ENCODE measurements at regions of chr17 and their contacts with region 1.

Region 1: GRCh38 chr17:35808962-35809854 is at the start of gene TAF15:
- DNase-seq: peak; percentile 85 to 97 (median 97)
- ATAC-seq: peak; percentile 97
- H3K4me3 ChIP-seq: peak within 1 kb of the TSS; percentile 91
- H3K4me3 Mint-ChIP-seq: peak within 1 kb of the TSS; percentile 86 to 99 (median 96)
- H3K27ac ChIP-seq: peak within 1 kb of the TSS; percentile 83
- H3K27ac Mint-ChIP-seq: peak within 1 kb of the TSS; percentile 91 to 99 (median 97)
- H3K4me1 ChIP-seq: peaks cover 33 to 37% of the 10 kb centered on the region in 2 donors
- H3K4me1 Mint-ChIP-seq: peaks cover 31 to 68% (median 57%) of the 10 kb centered on the region in 7 donors
- H3K27me3 ChIP-seq: no peaks in the 10 kb centered on the region
- H3K27me3 Mint-ChIP-seq: no peaks in the 10 kb centered on the region
- total RNA-seq, gene TAF15: 162 to 281 (median 243) TPM

Region 2: GRCh38 chr17:34961093-34961911 is 847.9 kb before region 1 on chr17 and contains the starts of genes CCT6B and ZNF830:
- CTCF ChIA-PET with region 1: no interaction called
- POLR2A ChIA-PET with region 1: interaction called, 3 read pairs
- intact Hi-C with region 1: loop called in 1 of 2 experiments (anchors 1 kb)
- DNase-seq: peak; percentile 69 to 94 (median 91)
- ATAC-seq: peak; percentile 95
- H3K4me3 ChIP-seq: peak within 1 kb of the TSS; percentile 94
- H3K4me3 Mint-ChIP-seq: peak within 1 kb of the TSS; percentile 97 to 100 (median 99)
- H3K27ac ChIP-seq: peak within 1 kb of the TSS; percentile 92
- H3K27ac Mint-ChIP-seq: peak within 1 kb of the TSS; percentile 98 to 100 (median 99)
- H3K4me1 ChIP-seq: peaks cover 14 to 16% of the 10 kb centered on the region in 2 donors
- H3K4me1 Mint-ChIP-seq: peaks cover 19 to 38% (median 33%) of the 10 kb centered on the region in 7 donors
- H3K27me3 ChIP-seq: no peaks in the 10 kb centered on the region
- H3K27me3 Mint-ChIP-seq: peaks cover 0 to 10% (median 5%) of the 10 kb centered on the region in 5 donors
- total RNA-seq, gene CCT6B: 1.6 to 3.8 (median 2.4) TPM
- total RNA-seq, gene ZNF830: 26.9 to 47.3 (median 44.9) TPM

Region 3: DNA sequence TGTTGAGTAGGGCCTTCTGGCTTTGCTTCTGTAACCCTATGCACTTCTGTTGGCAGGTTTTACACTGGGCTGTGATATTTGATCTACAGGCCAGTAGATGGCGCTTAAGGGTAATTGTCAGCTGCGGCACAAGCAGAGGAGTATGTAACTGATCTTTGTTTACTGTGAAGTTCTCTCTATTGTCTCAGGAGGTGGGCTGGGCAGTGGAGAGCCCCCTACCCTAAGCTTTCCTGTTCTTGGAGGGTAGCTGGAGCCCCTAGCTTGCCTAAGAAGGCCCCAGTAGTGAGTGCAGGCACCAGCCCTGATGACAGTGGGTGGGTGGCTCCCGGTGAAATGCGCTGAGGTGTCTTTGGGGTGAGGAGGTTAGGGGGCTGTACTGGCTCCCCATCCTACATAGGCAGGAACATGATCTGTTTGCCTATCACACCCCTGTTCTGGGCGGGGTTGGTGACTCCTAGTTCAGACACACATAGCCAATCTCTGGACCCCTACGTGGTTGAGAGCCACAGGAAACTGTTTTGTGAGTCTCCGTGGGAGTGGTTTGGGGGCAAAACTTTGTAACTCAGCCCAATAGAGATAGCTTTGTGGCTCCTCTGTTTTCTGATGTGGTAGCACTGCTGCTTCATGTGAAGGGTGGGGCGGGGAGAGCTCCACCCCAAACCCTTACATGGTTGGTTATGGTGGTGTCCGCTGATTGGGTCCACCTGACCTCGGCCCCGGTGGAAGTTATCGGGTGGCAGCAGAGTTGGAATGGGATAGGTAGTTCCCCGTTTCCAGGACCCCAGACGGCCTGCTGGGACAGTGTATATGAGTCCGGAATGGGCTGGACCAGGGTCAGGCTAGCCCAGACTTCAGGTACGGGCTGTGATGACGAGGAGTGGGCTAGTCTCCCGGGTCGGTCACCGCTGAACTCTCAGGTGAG is 496.2 kb before region 1 on chr17:
- CTCF ChIA-PET with region 1: no interaction called
- POLR2A ChIA-PET with region 1: no interaction called
- intact Hi-C with region 1: loop called in 1 of 2 experiments (anchors 10 kb)
- DNase-seq: peak; percentile 56 to 96 (median 90)
- ATAC-seq: peak; percentile 93
- H3K4me3 ChIP-seq: peak overlapping the region; percentile 70
- H3K4me3 Mint-ChIP-seq: peak overlapping the region; percentile 88 to 98 (median 96)
- H3K27ac ChIP-seq: peak overlapping the region; percentile 73
- H3K27ac Mint-ChIP-seq: peak overlapping the region; percentile 94 to 99 (median 98)
- H3K4me1 ChIP-seq: peaks cover 12 to 13% of the 10 kb centered on the region in 2 donors
- H3K4me1 Mint-ChIP-seq: peaks cover 37 to 79% (median 69%) of the 10 kb centered on the region in 7 donors
- H3K27me3 ChIP-seq: no peaks in the 10 kb centered on the region
- H3K27me3 Mint-ChIP-seq: peaks cover 0 to 5% (median 0%) of the 10 kb centered on the region in 5 donors

Region 4: DNA sequence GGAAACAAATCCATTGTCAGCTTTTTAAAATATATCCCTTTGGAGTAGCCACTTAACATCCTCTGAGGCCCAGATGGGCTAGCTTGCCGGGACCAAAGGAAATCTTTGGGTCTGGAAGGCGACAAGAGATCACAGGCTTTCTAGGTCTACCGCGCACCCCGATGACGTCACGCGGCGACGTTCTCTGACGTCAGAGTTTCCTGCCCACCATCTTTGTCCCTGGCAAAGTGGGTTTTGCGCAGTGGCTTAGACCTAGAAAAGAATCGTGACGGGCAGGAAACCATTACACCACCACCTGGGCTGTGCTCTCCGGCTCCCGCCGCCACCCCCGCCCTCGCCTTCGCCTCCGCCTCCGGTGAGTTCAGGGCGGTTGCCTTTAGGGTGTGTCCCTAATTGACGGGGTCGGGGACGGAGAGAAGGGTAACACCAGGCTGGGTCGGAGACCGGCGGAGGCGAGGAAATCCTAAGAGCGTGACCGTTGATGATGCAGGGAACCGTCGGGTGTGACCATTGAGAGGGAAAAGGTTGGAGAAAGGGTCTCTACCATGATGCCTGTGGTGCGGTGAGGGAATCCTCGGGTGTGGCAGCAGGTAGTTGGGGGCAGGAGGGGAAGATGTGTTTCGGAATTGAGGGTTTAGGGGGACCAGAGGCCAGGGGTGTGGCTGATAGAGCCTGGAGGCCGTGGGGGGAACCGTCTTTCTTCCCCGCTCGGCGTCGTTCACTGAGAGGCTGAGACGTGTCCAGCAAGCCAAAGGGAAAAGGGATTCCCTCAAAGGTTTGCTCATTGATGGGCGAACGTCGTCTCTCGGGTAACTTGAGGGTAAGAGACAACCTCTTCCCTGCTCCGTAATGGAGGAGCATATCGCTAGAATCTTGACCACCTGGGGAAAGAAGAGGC is 221.9 kb before region 1 on chr17 and contains the start of gene AP2B1:
- CTCF ChIA-PET with region 1: no interaction called
- POLR2A ChIA-PET with region 1: interaction called, 7 read pairs
- intact Hi-C with region 1: loop called (anchors 1 to 2 kb)
- DNase-seq: peak; percentile 96 to 100 (median 98)
- ATAC-seq: peak; percentile 99
- H3K4me3 ChIP-seq: peak within 1 kb of the TSS; percentile 85
- H3K4me3 Mint-ChIP-seq: peak within 1 kb of the TSS; percentile 92 to 99 (median 97)
- H3K27ac ChIP-seq: peak within 1 kb of the TSS; percentile 91
- H3K27ac Mint-ChIP-seq: peak within 1 kb of the TSS; percentile 95 to 99 (median 99)
- H3K4me1 ChIP-seq: peaks cover 13 to 17% of the 10 kb centered on the region in 2 donors
- H3K4me1 Mint-ChIP-seq: peaks cover 28 to 45% (median 38%) of the 10 kb centered on the region in 7 donors
- H3K27me3 ChIP-seq: no peaks in the 10 kb centered on the region
- H3K27me3 Mint-ChIP-seq: peaks cover 0 to 12% (median 0%) of the 10 kb centered on the region in 5 donors
- total RNA-seq, gene AP2B1: 84.7 to 197 (median 136) TPM

Region 5: DNA sequence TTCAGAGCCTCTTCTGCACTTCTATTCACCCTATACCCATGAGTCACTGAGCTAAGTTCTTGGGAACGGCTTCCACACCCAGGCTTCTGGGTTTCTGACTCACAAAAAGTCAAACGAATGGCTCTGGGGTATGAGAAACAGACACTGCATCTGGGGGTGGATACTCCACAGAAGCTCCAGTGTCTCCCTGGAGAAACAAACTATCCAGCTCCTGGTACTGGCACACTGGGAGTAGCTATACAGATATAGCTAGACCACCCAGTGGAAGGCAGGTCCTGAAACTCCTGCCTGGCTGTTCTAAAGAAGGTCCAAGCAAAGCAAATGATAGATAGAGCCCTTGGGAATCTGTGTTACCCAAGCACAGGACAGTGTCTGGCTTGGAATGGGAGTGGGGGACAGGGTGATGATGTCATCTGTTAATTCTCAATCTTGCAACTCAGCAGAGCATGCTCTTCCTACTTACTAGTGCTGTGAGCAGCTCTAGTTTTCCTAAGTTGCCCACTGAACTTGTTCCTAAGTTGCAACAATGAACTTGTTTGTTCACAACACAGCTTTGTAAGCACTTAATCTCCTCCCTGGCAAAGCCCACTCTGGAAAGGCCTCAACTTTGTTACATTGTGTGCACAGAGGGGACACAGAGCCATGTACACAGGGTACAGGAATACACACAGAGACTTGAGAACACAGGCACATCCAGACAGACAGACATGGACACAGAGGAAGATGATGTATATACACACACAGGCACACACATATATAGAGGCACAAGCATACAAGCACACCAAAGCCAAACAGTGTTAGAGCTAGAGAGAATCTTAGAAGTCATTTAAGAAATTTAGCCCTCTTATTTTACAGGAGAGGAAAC is 20.5 kb before region 1 on chr17:
- CTCF ChIA-PET with region 1: interaction called, 41 read pairs
- POLR2A ChIA-PET with region 1: interaction called, 34 read pairs
- intact Hi-C with region 1: loop called in 1 of 2 experiments (anchors 2 kb)
- DNase-seq: no peak
- ATAC-seq: no peak
- H3K4me3 ChIP-seq: no peak overlapping the region
- H3K4me3 Mint-ChIP-seq: peak overlapping the region in 9 of 10 donors; percentile 30 to 78 (median 58)
- H3K27ac ChIP-seq: peak overlapping the region; percentile 37
- H3K27ac Mint-ChIP-seq: peak overlapping the region in 8 of 9 donors; percentile 3 to 84 (median 66)
- H3K4me1 ChIP-seq: peaks cover 0 to 29% of the 10 kb centered on the region in 2 donors
- H3K4me1 Mint-ChIP-seq: peaks cover 2 to 69% (median 46%) of the 10 kb centered on the region in 7 donors
- H3K27me3 ChIP-seq: no peaks in the 10 kb centered on the region
- H3K27me3 Mint-ChIP-seq: peaks cover 0 to 62% (median 7%) of the 10 kb centered on the region in 5 donors

Region 6: GRCh38 chr17:35906191-35906922 is 97.1 kb after region 1 on chr17:
- CTCF ChIA-PET with region 1: no interaction called
- POLR2A ChIA-PET with region 1: no interaction called
- intact Hi-C with region 1: no loop called
- DNase-seq: no peak
- ATAC-seq: no peak
- H3K4me3 ChIP-seq: no peak overlapping the region
- H3K4me3 Mint-ChIP-seq: no peak overlapping the region
- H3K27ac ChIP-seq: no peak overlapping the region
- H3K27ac Mint-ChIP-seq: no peak overlapping the region
- H3K4me1 ChIP-seq: peaks cover 0 to 19% of the 10 kb centered on the region in 2 donors
- H3K4me1 Mint-ChIP-seq: peaks cover 0 to 2% (median 0%) of the 10 kb centered on the region in 7 donors
- H3K27me3 ChIP-seq: no peaks in the 10 kb centered on the region
- H3K27me3 Mint-ChIP-seq: peaks cover 0 to 4% (median 0%) of the 10 kb centered on the region in 5 donors

Region 7: DNA sequence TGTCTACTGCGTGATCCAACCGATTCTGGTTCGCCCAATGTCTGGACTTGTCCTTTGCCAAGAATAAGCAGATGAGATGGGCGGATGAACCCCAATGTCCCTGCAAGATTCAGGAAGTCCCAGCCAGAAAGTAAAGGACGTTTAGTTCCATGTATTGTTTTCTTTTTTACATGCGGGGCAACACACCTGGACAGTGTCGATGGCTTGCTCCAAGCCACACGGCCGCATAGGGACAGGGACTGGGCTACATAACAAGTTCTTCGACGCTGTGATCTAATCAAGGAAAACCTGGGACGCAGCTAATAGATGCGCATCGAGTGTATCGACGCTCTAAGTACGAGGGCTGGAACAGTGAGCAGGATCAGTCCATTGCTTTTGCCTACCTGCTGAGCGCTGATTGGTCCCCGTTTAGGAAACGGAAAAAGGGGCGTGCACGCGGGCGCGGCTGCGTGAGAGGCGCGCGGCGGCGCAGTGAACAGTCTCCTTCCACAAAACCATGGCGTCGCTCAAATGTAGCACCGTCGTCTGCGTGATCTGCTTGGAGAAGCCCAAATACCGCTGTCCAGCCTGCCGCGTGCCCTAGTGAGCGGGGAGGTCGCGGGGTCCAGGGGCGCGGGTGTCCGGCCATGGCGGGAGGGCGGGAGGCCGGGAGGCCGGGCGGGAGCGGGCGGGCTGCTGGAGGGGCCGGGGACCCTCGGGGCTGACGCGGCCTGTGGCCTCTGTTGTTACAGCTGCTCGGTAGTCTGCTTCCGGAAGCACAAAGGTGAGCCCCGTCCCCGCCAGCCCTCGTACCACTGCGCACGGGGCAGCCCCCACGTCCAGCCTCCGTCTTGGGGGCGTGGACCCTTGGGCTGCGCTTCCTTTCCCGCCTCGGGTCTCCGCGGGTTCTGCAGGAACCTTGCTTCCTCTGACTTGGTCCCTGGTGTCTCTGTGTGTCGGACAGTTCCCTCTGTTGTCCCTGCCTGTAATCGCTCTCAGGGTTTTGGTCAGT is 677.3 kb after region 1 on chr17 and contains the start of gene ZNHIT3:
- CTCF ChIA-PET with region 1: interaction called, 3 read pairs
- POLR2A ChIA-PET with region 1: interaction called, 4 read pairs
- intact Hi-C with region 1: loop called in 1 of 2 experiments (anchors 1 kb)
- DNase-seq: peak; percentile 74 to 94 (median 91)
- ATAC-seq: peak; percentile 98
- H3K4me3 ChIP-seq: peak within 1 kb of the TSS; percentile 82
- H3K4me3 Mint-ChIP-seq: peak within 1 kb of the TSS; percentile 87 to 100 (median 100)
- H3K27ac ChIP-seq: peak within 1 kb of the TSS; percentile 86
- H3K27ac Mint-ChIP-seq: peak within 1 kb of the TSS; percentile 94 to 100 (median 99)
- H3K4me1 ChIP-seq: peaks cover 29 to 41% of the 10 kb centered on the region in 2 donors
- H3K4me1 Mint-ChIP-seq: peaks cover 39 to 70% (median 49%) of the 10 kb centered on the region in 7 donors
- H3K27me3 ChIP-seq: no peaks in the 10 kb centered on the region
- H3K27me3 Mint-ChIP-seq: peaks cover 8 to 11% (median 10%) of the 10 kb centered on the region in 5 donors
- total RNA-seq, gene ZNHIT3: 38.4 to 59.9 (median 57.4) TPM

Measured in naive thymus-derived CD4-positive, alpha-beta T cell (primary cell).